ENCODE measurements at regions of chr5 and their contacts with region 1.

Region 1: DNA sequence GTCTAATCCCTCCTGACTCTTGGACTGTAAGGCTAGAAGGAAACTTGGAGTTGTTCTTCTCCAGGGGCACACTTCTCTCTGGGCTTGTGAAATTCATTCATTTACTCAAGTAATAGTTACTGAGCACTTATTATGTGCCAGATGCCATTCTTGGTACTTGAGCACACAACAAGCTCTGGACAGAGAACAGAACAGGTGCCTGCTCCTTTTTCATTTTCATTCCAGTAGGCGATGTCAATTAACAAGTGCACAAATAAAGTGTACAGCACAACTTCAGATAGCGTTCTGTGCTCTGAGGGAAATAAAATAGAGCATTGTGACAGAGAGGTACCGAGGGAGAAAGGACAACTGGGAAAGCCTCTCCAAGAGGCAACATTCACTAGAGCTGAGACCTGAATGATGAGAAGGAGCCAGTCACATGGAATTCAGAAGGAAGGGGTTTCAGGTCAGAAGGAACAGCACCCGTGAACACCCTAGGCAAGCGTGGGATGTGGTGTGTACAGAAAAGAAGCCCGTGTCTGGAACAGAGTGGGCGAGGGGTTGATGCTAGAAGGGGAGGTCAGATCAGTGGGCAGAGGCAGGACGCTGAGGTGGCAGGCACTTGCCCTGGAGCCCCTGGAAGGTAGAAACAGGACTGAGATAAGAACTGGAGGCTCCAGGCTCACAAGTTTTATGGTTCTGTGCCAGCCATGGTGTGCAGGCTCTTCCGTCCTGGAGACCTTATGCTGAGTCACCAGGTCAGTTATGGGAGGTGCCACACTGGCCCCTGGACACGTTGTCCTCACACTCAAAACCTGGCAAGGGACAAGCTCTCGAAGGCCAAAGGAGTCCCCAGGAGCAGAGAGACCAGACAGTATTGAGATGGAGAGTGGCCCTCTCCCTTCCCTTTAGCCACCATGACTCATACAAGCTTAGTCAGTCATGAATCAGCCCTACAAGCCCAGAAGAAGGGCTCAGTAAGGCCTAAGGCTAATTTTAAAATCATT is 7.2 kb upstream of the ABLIM3 start:
- DNase-seq: peak in 3 of 4 donors; percentile 29 to 75 (median 63)
- ATAC-seq: peak; percentile 74
- H3K4me3 ChIP-seq: no peak overlapping the region
- H3K27ac ChIP-seq: no peak overlapping the region
- H3K4me1 ChIP-seq: peaks cover 7% of the 10 kb centered on the region
- H3K27me3 ChIP-seq: no peaks in the 10 kb centered on the region
- CTCF ChIP-seq: no peak
- POLR2A ChIP-seq: no peak

Region 2: DNA sequence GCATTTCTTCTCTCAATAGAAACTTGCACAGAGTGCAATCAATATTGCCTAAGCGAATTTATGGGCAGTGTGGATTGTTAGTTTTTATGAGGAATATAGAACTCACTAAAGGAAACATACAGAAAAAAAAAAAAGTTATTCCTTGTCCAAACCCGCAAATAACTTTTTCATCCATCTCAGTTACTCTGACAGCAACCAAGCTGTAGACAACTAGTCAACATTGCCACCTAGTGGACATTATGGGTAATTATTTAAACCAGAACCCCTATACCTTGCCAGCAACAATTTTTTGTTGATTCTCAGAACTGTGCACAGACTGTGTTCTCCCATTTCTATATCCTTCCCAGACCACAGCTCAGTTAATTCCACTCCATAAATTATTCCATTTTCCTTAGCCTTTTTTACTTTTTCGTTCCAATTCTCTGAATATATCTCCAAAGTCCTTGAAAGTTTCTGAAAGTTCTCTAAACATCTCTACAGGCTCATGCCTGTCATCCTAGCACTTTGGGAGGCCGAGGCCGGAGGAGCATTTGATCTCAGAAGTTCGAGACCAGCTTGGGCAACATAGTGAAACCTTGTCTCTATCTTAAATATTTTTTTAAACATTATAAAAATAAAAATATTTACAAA is 135.0 kb after region 1 on chr5:
- intact Hi-C with region 1: loop called (anchors 10 kb)
- DNase-seq: no peak
- ATAC-seq: no peak
- H3K4me3 ChIP-seq: no peak overlapping the region
- H3K27ac ChIP-seq: no peak overlapping the region
- H3K4me1 ChIP-seq: peaks cover 19% of the 10 kb centered on the region
- H3K27me3 ChIP-seq: peaks cover 0 to 16% of the 10 kb centered on the region in 2 donors
- CTCF ChIP-seq: peak; percentile 11 to 61 (median 56)
- POLR2A ChIP-seq: no peak

Region 3: DNA sequence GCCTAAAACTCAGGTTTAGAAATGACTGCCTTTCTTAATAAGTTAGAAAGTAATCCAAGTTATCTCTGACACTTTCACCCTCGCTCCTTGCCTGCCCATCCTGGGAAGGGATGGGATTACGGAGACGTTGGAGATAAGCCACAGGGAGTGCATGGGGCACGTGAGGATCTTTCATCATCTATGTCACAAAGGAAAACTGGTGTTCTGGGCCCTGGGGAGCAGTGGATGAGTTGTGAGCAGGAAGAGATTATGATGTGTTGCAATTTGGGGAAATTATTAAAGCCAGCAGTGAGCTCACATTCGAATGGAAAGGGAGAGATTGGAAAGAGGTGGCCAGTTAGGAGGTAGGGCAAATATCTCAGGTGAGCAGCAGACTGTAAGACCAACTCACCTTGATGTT is 150.4 kb after region 1 on chr5:
- intact Hi-C with region 1: no loop called
- DNase-seq: peak in 2 of 4 donors; percentile 16 to 26
- ATAC-seq: no peak
- H3K4me3 ChIP-seq: no peak overlapping the region
- H3K27ac ChIP-seq: no peak overlapping the region
- H3K4me1 ChIP-seq: no peaks in the 10 kb centered on the region
- H3K27me3 ChIP-seq: no peaks in the 10 kb centered on the region
- CTCF ChIP-seq: no peak
- POLR2A ChIP-seq: no peak

Region 4: DNA sequence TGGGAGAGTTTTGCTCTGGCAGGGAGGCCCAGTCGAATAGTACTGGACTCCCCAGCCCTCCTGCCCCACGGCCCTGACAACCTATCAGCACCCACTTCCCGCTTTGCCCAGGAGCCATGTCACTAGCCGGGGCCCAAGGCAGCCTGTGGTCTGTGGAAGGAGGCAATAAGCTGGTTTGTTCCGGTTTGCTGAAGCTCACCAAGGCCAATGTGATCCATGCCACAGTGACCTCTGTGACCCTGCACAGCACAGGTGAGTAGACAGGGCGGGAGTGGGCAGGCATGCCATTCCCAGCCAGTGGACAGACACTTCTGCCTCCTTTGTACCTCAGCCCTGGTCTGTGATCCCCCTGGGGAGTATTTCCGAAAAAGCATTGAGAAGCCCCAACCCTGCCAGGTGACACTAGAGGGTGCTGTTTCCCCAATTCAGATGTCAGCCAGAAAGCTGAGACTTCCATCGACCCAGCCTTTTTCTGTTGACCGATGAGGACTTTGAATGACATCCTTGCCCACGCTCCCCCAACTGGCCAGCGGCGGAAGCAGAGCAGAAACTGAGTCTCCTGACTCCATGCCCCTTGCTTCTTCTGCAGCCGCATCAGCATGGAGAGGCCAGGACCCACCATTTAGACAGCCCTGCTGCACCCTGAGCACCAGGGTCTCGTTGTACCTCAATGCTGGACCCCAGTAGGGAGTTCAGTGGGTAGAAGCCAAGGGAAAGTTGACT is 233.3 kb after region 1 on chr5:
- intact Hi-C with region 1: no loop called
- DNase-seq: peak; percentile 58 to 68 (median 61)
- ATAC-seq: peak; percentile 69
- H3K4me3 ChIP-seq: no peak overlapping the region
- H3K27ac ChIP-seq: no peak overlapping the region
- H3K4me1 ChIP-seq: peaks cover 18% of the 10 kb centered on the region
- H3K27me3 ChIP-seq: no peaks in the 10 kb centered on the region
- CTCF ChIP-seq: peak; percentile 54 to 72 (median 66)
- POLR2A ChIP-seq: no peak